Mammary epithelial cell (primary cell): ENCODE measurements at regions of chr16 and their contacts with region 1.

Region 1: DNA sequence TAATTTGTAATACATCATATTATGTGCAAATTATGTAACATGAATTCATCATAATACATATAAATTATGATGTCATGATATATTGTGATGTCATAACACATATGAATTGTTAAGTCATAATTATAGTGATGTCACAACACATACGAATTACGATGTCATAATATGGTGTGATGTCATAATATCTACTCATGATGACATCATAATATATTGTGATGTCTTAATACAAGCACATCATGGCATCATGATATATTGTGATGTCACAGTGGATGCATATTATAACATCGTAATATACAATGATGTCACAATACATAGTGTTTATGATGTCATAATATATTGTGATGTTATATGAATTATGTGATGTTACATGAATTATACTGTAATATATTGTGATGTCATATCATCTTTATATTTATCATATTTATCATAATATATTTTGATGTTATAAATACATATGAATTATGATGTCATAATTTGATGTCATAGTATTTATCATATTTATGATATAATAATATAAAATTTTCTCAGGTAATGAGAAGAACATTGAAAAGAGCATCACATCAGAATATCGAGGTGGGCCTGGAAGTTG is 1793.0 kb downstream of the TP53TG3F start:
- DNase-seq: no peak
- H3K4me3 ChIP-seq: no peak overlapping the region
- H3K27ac ChIP-seq: no peak overlapping the region
- H3K4me1 ChIP-seq: no peaks in the 10 kb centered on the region
- H3K27me3 ChIP-seq: no peaks in the 10 kb centered on the region
- CTCF ChIP-seq: no peak

Region 2: DNA sequence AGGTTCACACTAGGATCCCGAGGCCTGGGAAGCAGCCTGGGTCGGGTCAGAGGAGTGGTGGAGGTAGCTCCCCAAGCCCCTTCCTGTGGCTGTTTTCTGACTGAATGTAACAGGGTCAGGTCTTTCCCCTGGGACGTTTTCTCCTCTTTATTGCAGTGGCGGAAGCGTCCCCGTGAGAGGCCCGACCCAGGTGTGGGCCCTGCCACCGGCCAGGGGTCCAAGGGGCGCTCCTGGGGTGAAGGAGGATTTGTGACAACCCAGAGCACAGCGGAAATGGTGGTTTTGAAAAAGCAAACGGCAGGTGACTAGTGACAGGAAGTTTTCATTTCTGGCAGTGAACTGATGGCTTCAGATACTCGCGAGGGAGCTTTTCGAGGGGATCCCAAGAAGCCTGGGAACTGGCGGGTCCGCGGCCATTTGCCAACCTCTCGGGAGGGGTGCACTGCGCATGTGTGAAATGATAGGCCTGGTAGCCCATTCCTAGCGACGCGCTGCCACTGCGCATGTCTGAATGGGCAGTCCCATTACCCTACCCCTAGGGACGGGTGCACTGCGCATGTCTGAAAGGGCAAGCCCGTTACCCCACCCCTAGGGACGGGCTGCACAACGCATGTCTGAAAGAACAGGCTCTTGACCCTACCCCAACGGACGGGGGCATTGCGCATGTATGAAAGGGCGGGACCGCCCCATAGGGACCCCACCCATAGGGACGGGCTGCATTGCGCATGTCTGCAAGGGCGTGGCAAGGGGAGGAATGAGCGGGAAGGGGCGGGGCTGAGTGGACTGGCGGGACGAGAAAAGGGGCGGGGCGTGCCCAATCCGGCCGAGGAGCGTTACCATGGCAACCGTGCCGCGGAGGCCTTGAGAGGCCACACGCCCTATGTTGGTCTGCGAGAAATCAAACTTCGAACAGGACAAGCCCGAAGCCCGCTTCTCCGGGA is 45.1 kb before region 1 on chr16:
- CTCF ChIA-PET with region 1: no interaction called
- dilution Hi-C with region 1: no loop called
- in situ Hi-C with region 1: no loop called
- intact Hi-C with region 1: no loop called
- DNase-seq: no peak
- H3K4me3 ChIP-seq: no peak overlapping the region
- H3K27ac ChIP-seq: no peak overlapping the region
- H3K4me1 ChIP-seq: no peaks in the 10 kb centered on the region
- H3K27me3 ChIP-seq: no peaks in the 10 kb centered on the region
- CTCF ChIP-seq: no peak

Region 3: GRCh38 chr16:35516551-35516950 is 264.1 kb after region 1 on chr16:
- CTCF ChIA-PET with region 1: no interaction called
- dilution Hi-C with region 1: no loop called
- in situ Hi-C with region 1: no loop called
- intact Hi-C with region 1: loop called (anchors 5 kb)
- DNase-seq: peak; percentile 8
- H3K4me3 ChIP-seq: no peak overlapping the region
- H3K27ac ChIP-seq: no peak overlapping the region
- H3K4me1 ChIP-seq: no peaks in the 10 kb centered on the region
- H3K27me3 ChIP-seq: no peaks in the 10 kb centered on the region
- CTCF ChIP-seq: no peak